Gastrocnemius medialis (tissue), 4 donors: ENCODE measurements at regions of chr9 and their contacts with region 1.

Region 1: DNA sequence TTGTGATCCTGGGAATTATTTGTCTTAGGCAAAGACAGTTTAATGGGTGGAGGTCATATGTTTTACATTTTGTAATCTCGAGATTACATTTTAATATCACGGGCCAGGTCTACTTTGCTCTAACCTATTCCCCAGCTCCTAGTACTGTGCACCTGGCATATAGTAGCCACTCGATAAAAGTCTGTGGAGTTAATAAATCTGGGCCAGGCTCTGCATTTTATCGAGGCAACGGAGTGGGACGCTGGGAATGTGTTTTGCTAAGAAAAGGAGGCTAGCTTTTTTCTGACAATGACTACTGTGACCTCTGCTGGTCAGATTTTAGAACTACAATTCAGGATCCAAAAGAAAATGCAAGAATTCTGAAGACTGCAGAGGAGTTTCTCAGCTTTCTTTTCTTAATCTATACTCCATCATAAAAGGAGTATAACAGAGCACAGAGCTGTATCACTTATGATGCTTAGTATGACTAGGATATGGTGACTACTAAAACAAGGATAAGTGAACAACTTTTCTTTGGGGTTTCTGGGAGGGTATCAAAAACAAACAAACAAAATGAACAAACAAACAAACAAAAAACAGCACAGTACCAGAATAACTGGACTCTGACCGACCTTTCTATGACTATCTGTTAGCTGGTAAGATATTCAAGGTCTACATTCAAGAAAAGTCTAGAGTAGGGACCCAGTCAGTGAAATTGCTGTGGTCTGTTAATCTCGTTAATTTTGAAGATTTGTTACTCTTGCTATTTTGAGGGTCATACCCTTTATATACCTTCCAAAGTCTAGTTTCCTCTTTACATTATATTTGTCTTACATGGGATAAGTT is 46.1 kb upstream of the CER1 start:
- DNase-seq: no peak
- ATAC-seq: peak; percentile 55 to 62
- H3K4me3 ChIP-seq: no peak overlapping the region
- H3K27ac ChIP-seq: no peak overlapping the region
- H3K4me1 ChIP-seq: peaks cover 0 to 5% of the 10 kb centered on the region in 2 donors
- H3K27me3 ChIP-seq: no peaks in the 10 kb centered on the region
- CTCF ChIP-seq: peak; percentile 51 to 79 (median 67)
- POLR2A ChIP-seq: no peak

Region 2: DNA sequence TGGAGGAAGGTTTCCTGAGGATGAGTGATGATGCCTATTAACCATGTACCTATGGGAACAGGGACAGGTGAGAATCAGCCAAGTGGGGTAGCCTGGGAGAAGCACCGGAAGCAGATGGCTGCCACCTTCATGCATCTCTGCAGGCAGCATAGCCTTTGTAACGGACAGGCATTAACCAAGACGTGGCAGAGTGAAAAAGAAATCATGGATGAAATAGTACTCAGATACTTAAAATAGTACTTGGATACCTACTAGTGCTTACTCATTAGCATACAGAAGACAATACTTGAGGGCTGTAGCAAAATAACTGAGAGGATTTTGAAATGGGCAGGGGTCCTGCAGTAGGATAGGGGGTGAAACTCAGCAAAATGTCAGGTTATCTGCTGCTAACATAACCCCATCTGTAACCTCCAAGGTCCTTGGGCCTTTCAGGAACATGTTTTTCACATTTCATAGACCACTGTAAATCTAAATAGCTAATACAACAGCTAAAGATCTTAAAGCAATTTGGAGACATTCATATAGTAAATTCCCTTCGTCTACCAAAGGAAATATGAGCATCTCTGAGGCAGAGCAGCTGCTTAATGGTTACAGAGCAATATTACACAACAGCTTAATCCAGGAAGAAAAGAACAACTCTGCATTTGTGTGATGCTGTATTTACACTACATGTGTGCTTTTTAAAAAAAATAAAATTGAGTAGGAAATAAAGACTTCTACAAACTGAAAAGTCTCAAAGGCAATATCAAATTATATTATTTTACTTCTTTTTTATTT is 609.0 kb before region 1 on chr9:
- in situ Hi-C with region 1: no loop called
- intact Hi-C with region 1: no loop called
- DNase-seq: no peak
- ATAC-seq: peak; percentile 40 to 67
- H3K4me3 ChIP-seq: no peak overlapping the region
- H3K27ac ChIP-seq: peak overlapping the region in 2 of 4 donors; percentile 28 to 47
- H3K4me1 ChIP-seq: peaks cover 32 to 59% of the 10 kb centered on the region in 2 donors
- H3K27me3 ChIP-seq: no peaks in the 10 kb centered on the region
- CTCF ChIP-seq: no peak
- POLR2A ChIP-seq: no peak

Region 3: GRCh38 chr9:14451949-14452348 is 316.7 kb before region 1 on chr9:
- in situ Hi-C with region 1: loop called in 1 of 4 experiments (anchors 25 kb)
- intact Hi-C with region 1: no loop called
- DNase-seq: no peak
- ATAC-seq: no peak
- H3K4me3 ChIP-seq: no peak overlapping the region
- H3K27ac ChIP-seq: no peak overlapping the region
- H3K4me1 ChIP-seq: no peaks in the 10 kb centered on the region
- H3K27me3 ChIP-seq: no peaks in the 10 kb centered on the region
- CTCF ChIP-seq: no peak
- POLR2A ChIP-seq: no peak

Region 4: DNA sequence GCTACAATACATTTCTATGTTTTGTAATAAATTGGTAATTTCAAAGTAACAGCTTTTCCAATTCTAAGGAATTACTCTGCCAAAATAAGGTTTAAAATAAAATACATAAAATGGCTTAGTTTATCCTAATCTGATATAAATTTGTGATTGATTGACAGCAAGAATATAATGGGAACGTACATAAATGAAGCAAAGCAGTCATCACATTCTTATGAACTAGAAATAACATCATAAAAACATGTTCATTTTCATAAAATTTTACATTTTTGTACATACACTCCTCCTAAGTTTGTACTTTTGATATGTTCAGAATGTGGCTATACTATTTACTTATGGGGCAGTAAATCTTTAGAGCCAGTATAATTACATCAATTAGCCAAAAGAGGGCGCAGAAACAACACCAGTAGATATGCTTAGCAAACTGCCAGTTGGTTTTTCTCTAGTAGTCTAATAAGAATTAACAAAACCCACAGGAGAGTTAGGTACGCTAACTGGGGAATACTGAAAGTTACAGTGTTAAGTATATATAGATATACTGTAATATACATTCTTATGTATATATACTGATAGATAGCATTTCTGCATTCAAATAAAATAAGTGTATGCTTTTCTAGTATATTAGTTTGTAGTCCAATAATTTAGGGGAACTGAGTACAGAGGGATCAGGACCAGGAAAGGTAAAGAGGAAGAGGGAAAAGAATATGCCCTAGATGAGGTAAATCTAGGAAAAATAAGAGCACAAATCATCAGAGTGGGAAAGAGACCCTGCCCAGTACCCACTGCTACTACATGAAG is 152.2 kb before region 1 on chr9:
- in situ Hi-C with region 1: loop called (anchors 5 to 10 kb)
- intact Hi-C with region 1: loop called (anchors 1 kb)
- DNase-seq: no peak
- ATAC-seq: peak in 1 of 2 donors; percentile 61
- H3K4me3 ChIP-seq: no peak overlapping the region
- H3K27ac ChIP-seq: no peak overlapping the region
- H3K4me1 ChIP-seq: no peaks in the 10 kb centered on the region
- H3K27me3 ChIP-seq: no peaks in the 10 kb centered on the region
- CTCF ChIP-seq: peak in 4 of 5 experiments; percentile 38 to 66 (median 46)
- POLR2A ChIP-seq: no peak

Region 5: GRCh38 chr9:14693206-14693861 is 75.3 kb before region 1 on chr9 and contains the start of gene ZDHHC21:
- in situ Hi-C with region 1: no loop called
- intact Hi-C with region 1: loop called (anchors 5 kb)
- DNase-seq: peak; percentile 33 to 56
- ATAC-seq: peak; percentile 79 to 81
- H3K4me3 ChIP-seq: peak within 1 kb of the TSS; percentile 59 to 73 (median 70)
- H3K27ac ChIP-seq: peak within 1 kb of the TSS; percentile 62 to 77 (median 73)
- H3K4me1 ChIP-seq: peaks cover 9 to 13% of the 10 kb centered on the region in 2 donors
- H3K27me3 ChIP-seq: no peaks in the 10 kb centered on the region
- CTCF ChIP-seq: no peak
- POLR2A ChIP-seq: peak in 1 of 2 donors; percentile 41
- total RNA-seq, gene ZDHHC21: 3.7 to 15.9 (median 6.1) TPM

Region 6: DNA sequence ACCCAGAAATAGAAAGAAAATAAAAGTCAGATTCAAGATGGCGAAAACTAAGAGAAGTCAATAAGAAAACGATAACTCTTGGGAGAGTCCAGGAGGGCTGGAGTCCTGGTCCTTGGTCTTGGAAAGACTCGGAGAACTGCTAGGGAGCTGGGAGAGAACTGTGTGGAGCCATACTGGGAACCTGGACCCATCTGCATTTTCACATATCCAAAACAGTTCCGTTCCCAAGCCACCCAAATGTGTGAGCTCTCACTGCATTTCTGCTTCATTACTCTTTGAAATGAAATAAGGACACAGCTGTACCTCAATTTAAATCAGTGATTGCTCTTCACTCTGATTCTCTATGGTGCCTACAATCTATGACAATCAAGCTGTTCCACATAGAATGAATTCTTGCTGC is 22.0 kb after region 1 on chr9:
- in situ Hi-C with region 1: no loop called
- intact Hi-C with region 1: no loop called
- DNase-seq: no peak
- ATAC-seq: no peak
- H3K4me3 ChIP-seq: no peak overlapping the region
- H3K27ac ChIP-seq: no peak overlapping the region
- H3K4me1 ChIP-seq: no peaks in the 10 kb centered on the region
- H3K27me3 ChIP-seq: no peaks in the 10 kb centered on the region
- CTCF ChIP-seq: no peak
- POLR2A ChIP-seq: no peak

Region 7: DNA sequence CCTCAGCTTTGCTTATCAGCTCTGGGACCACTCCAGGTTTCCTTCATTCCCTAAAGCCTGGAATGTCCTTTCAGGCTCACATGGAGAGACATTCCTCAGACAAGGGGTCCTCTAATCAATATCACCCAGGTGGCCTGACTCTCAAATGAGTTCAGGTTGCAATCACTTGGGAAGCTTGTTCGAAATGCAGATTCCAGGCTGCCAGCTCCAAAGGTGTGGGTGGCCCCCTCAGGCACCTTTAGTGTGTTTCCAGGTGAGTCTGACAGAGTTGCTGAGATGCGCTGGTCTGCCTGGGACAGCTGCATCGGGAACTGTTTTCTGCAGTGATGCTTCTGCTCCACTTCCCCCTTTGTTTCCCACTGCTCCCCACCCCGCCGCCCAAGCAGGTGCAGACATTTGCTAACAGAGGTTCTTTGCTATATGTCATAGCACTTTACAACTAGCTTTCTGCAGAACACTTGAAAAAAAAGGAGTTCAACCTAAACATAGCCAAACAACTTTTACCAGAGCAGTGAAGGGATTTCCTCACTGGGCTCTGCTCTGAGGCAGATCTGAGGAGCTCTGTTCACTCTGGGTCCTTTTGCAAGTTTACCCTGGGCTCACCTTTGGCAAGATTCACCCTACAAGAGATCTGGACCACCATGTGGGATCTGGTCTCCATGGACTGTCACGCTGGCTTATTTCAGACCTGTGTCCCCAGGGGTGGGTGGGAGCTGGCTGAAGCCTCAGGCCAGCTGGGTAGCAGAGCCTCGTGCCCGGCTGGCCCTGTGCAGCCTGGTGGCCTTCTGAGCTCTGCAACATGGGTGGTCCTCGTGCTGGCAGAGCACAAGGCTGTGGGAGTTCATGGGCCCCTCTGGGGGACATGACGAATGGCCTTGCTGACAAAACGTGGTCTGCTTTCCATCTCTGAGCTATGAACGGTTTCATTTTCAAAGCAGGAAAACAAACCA is 1323.8 kb after region 1 on chr9:
- in situ Hi-C with region 1: no loop called
- intact Hi-C with region 1: no loop called
- DNase-seq: no peak
- ATAC-seq: no peak
- H3K4me3 ChIP-seq: no peak overlapping the region
- H3K27ac ChIP-seq: no peak overlapping the region
- H3K4me1 ChIP-seq: no peaks in the 10 kb centered on the region
- H3K27me3 ChIP-seq: no peaks in the 10 kb centered on the region
- CTCF ChIP-seq: no peak
- POLR2A ChIP-seq: no peak